Mammary epithelial cell (primary cell): ENCODE measurements at regions of chr16 and their contacts with region 1.

Region 1: DNA sequence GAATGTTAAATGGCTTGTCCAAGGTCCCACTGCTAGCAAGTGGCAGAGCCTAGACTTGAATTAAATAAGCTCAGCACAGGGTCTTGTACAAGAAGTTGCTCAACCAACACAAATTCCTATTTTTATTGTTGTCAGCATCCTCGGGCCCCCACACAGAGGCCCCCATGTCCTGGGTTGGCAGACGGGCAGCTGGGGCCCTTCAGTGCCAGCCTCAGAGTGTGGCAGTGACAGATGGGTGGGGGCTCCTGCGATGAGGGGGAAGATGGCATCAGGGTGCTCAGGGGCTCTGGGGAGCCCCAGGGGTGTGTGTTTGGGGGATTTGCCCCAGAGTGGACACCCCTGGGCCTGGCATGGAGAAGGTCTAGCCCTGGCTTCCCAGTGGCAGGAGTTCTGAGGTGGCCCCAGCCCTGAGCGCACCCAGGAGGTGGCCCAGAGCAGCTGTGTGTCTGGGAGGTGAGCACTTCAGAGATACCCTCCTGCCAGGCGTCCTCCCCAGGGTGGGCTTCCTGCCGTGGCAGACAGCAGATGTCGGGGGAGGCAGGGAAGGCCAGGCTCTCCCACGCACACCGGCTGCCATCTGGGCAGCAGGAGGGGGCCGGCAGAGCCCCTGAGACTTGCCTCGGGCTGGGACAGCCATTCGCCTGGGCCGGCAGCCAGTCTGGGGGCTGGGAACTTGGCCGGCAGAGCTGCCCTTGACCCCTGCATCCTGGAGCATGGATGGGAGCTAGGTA is 150.8 kb downstream of the C16orf78 start:
- DNase-seq: no peak
- H3K4me3 ChIP-seq: no peak overlapping the region
- H3K27ac ChIP-seq: no peak overlapping the region
- H3K4me1 ChIP-seq: no peaks in the 10 kb centered on the region
- H3K27me3 ChIP-seq: no peaks in the 10 kb centered on the region
- CTCF ChIP-seq: no peak

Region 2: GRCh38 chr16:49437344-49437743 is 87.0 kb before region 1 on chr16:
- CTCF ChIA-PET with region 1: no interaction called
- dilution Hi-C with region 1: loop called (anchors 5 kb)
- in situ Hi-C with region 1: no loop called
- intact Hi-C with region 1: no loop called
- DNase-seq: no peak
- H3K4me3 ChIP-seq: no peak overlapping the region
- H3K27ac ChIP-seq: no peak overlapping the region
- H3K4me1 ChIP-seq: no peaks in the 10 kb centered on the region
- H3K27me3 ChIP-seq: no peaks in the 10 kb centered on the region
- CTCF ChIP-seq: no peak

Region 3: DNA sequence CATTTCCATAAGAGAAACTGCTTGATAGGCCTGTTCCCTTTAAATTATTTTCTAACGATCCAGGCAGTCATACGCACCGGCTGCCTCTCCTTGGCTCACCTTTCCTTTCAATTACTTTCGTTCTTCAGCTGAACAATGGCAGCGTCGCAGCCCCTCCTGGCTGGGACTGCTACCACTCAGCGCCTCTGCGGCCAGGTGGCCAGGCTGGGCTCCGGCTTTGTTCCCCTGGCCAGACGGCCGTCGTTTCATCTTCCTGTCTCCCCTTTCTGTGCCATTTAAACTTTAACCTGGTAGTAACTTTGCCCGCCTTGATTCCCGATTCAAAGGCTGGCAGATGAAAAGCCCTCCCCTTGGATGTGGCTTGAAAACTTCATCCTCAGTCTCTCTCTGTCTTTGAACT is 71.8 kb before region 1 on chr16:
- CTCF ChIA-PET with region 1: no interaction called
- dilution Hi-C with region 1: no loop called
- in situ Hi-C with region 1: no loop called
- intact Hi-C with region 1: no loop called
- DNase-seq: no peak
- H3K4me3 ChIP-seq: no peak overlapping the region
- H3K27ac ChIP-seq: no peak overlapping the region
- H3K4me1 ChIP-seq: no peaks in the 10 kb centered on the region
- H3K27me3 ChIP-seq: no peaks in the 10 kb centered on the region
- CTCF ChIP-seq: no peak

Region 4: DNA sequence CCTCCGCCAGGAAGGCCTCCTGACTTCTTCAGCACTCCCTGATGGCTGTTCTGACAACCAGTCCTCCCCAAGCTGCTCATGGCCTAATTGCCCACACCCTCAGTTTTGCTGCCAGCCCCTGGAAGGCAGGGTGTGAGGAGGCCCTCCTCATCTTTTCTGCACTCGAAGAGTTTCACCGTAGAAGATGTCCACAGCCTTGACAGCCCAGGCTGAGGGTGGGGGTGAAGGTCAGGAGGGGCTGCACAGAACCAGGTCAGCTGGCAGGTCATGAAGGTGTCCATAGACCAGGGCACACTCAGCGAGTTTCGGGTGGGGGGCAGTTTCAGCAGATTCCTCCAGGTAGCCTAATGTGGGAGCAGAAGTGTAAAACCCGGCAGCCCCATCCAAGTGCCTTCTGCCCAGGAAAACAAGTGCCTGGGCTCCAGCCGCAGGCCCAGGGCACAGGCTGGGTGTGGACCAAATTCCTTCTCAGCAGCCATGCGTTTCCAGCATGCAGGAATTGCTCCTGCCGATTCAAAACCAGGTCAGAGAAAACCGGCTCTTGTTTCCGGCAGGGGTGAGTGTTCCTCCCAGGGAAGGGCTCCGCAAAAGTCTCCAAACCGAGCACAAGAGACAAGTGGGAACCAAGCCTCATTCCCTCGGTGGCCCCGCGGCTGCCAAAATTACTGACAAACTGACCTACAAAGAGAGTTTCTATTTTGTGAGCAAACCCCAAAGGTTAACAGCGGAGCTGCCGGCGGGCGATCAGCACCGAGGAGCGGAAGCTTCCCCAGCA is 78.0 kb after region 1 on chr16:
- CTCF ChIA-PET with region 1: interaction called, 3 read pairs
- dilution Hi-C with region 1: loop called (anchors 5 kb)
- in situ Hi-C with region 1: no loop called
- intact Hi-C with region 1: no loop called
- DNase-seq: no peak
- H3K4me3 ChIP-seq: no peak overlapping the region
- H3K27ac ChIP-seq: no peak overlapping the region
- H3K4me1 ChIP-seq: no peaks in the 10 kb centered on the region
- H3K27me3 ChIP-seq: no peaks in the 10 kb centered on the region
- CTCF ChIP-seq: no peak